Activated T-helper 2 cell treated with anti-CD3 and anti-CD28 coated beads, Interferon-gamma antibody, Interleukin-2, Interleukin-4, amounts not matched to agents 10 μg/mL and 5 μg/mL and 100 μg/mL, durations not matched to agents 14 hours and 24 hours and 36 hours (primary cell): ENCODE measurements at regions of chr1 and their contacts with region 1.

Region 1: GRCh38 chr1:174159252-174160108 is at the start of gene RABGAP1L:
- DNase-seq: peak; percentile 91
- H3K4me3 Mint-ChIP-seq: peak within 1 kb of the TSS; percentile 99
- H3K27ac Mint-ChIP-seq: peak within 1 kb of the TSS; percentile 96
- H3K4me1 Mint-ChIP-seq: peaks cover 53% of the 10 kb centered on the region
- H3K27me3 Mint-ChIP-seq: no peaks in the 10 kb centered on the region
- total RNA-seq, gene RABGAP1L: 28.8 and 31.5 TPM in 2 replicates

Region 2: DNA sequence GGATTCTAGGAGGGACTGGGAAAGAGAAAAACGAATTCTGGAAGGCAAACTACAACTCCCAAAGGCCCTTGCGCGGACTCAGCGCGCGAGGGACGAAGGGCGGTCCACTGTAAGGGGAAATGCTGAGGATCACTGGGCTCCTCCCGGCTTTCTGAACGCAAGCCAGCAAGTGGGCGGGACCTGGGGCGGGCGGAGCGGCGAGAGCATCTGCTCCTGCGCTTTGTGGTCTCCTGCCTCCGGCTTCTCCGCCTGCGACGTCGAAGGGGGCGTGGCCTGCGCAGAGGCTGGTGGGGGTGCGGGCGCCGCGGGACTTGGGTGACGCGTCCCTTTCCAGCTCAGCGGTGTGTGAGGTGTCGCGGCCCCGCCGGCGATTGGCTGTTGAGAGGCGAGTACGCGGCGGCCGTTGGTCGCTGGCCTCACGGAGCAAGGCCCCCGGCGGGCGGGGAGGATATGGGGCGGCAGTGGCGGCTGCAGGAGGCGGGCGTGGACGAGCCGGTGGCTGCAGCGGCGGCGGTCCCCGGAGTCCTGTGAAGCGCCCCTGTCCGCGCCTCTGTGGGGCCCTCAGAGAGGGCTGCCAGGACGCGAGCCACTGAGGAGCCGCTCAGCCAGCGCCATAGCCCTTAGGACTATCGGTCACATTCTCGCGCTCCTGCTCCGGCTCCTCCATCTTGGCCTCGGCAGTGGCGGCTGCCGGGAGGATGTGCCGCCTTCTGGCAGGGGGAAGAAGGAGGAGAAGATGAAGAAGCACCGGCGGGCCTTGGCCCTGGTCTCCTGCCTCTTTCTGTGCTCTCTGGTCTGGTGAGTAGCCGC is 1626.6 kb before region 1 on chr1 and contains the start of gene SUCO:
- intact Hi-C with region 1: loop called (anchors 2 kb)
- DNase-seq: peak; percentile 100
- H3K4me3 Mint-ChIP-seq: peak within 1 kb of the TSS; percentile 95
- H3K27ac Mint-ChIP-seq: peak within 1 kb of the TSS; percentile 99
- H3K4me1 Mint-ChIP-seq: peaks cover 38% of the 10 kb centered on the region
- H3K27me3 Mint-ChIP-seq: peaks cover 9% of the 10 kb centered on the region
- total RNA-seq, gene SUCO: 28.2 and 33.3 TPM in 2 replicates

Region 3: GRCh38 chr1:173420330-173420806 is 739.1 kb before region 1 on chr1:
- intact Hi-C with region 1: loop called (anchors 5 kb)
- DNase-seq: peak; percentile 55
- H3K4me3 Mint-ChIP-seq: no peak overlapping the region
- H3K27ac Mint-ChIP-seq: no peak overlapping the region
- H3K4me1 Mint-ChIP-seq: peaks cover 3% of the 10 kb centered on the region
- H3K27me3 Mint-ChIP-seq: no peaks in the 10 kb centered on the region

Region 4: GRCh38 chr1:173714759-173715537 is 444.5 kb before region 1 on chr1 and contains the start of gene KLHL20:
- intact Hi-C with region 1: loop called (anchors 5 kb)
- DNase-seq: peak; percentile 83
- H3K4me3 Mint-ChIP-seq: peak within 1 kb of the TSS; percentile 97
- H3K27ac Mint-ChIP-seq: peak within 1 kb of the TSS; percentile 94
- H3K4me1 Mint-ChIP-seq: peaks cover 18% of the 10 kb centered on the region
- H3K27me3 Mint-ChIP-seq: peaks cover 14% of the 10 kb centered on the region
- total RNA-seq, gene KLHL20: 15.4 and 17.6 TPM in 2 replicates

Region 5: GRCh38 chr1:173867753-173868265 is 291.7 kb before region 1 on chr1 and contains the start of gene GAS5:
- intact Hi-C with region 1: loop called (anchors 2 kb)
- DNase-seq: peak; percentile 99
- H3K4me3 Mint-ChIP-seq: peak within 1 kb of the TSS; percentile 98
- H3K27ac Mint-ChIP-seq: peak within 1 kb of the TSS; percentile 96
- H3K4me1 Mint-ChIP-seq: peaks cover 49% of the 10 kb centered on the region
- H3K27me3 Mint-ChIP-seq: no peaks in the 10 kb centered on the region
- total RNA-seq, gene GAS5: 650 and 661 TPM in 2 replicates

Region 6: GRCh38 chr1:174204697-174205308 is 45.3 kb after region 1 on chr1:
- intact Hi-C with region 1: loop called (anchors 2 kb)
- DNase-seq: no peak
- H3K4me3 Mint-ChIP-seq: no peak overlapping the region
- H3K27ac Mint-ChIP-seq: peak overlapping the region; percentile 83
- H3K4me1 Mint-ChIP-seq: peaks cover 35% of the 10 kb centered on the region
- H3K27me3 Mint-ChIP-seq: no peaks in the 10 kb centered on the region

Region 7: DNA sequence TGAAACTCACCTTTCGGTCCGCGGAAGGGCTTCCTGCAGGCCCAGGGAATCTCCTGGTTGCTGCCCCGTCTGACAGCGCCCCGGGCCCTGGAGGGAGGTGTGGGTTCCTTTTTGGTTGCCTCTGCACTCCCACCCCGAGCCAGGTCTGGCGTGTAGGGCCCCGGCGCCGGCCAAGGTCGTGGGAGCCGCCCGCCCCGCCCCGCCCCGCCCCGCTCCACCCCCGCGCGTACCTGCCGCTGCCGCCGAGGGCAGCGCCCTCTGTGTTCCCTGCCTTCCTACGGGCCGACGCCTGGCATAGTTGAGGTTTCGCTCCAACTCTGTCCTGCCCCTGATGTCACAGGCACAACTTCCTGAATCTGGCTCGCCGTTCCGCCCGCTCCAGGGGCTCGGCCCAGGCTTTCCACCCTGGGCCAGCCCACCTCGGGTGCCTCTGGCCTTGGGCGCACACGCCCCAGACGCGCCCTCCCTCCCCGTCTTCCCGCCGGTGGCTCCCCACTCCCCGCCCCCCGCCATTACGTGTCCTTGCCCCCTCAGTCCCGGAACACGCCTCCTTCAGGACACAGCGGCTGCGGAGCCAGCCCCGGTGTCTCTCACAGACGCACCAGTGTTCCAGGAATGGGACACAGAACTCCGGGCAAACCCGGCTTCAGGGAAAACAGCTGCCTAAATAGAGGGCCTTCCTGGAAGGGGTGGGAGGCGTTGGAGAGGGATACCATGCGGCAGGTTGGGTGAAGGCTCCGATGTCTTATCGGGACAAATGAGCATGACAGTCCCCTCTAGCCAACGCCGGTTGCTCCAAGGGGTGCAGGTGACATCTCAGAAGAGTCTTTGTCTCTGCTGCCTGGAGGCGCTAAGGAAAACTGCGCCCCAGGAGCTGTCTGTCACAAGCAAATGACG is 1033.4 kb after region 1 on chr1 and contains the start of gene KIAA0040:
- intact Hi-C with region 1: loop called (anchors 10 kb)
- DNase-seq: peak; percentile 51
- H3K4me3 Mint-ChIP-seq: peak within 1 kb of the TSS; percentile 95
- H3K27ac Mint-ChIP-seq: peak within 1 kb of the TSS; percentile 92
- H3K4me1 Mint-ChIP-seq: peaks cover 55% of the 10 kb centered on the region
- H3K27me3 Mint-ChIP-seq: no peaks in the 10 kb centered on the region
- total RNA-seq, gene KIAA0040: 30.0 and 35.3 TPM in 2 replicates